Dendritic cell treated with granulocyte-macrophage colony-stimulating factor and Interleukin-4, amounts not matched to agents 40 ng/mL and 50 ng/mL, for 4 days (primary cell): ENCODE measurements at regions of chr20 and their contacts with region 1.

Region 1: DNA sequence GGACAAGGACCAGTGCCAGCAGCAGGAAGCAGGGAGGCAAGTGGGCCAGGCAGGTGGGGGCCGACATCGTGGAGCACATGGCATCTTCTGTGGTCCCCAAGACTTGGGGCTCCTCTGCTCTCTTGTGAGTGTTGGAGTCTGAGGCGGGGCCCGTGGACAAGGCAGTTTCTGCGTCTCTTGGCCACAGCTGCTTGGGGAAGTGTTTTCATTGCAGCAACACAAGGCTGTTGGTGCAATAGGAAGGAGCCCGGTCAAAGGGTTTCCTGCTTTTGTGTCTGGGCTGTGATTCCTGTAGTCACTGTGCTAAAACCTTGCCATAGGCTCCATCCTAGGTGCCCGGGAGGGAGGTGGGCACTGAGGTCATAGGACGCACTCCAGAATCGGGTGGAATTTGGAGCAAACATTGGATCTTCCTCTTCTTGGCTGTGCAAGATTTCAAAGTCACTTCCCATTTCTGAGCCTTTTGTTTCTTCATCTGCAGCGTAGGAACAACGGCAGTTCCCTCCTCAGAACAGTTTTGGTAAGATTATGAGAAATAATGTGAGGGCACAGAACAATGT is at the start of gene SIRPB2:
- H3K4me3 Mint-ChIP-seq: peak within 1 kb of the TSS; percentile 88
- H3K27ac Mint-ChIP-seq: peak within 1 kb of the TSS; percentile 98
- H3K4me1 Mint-ChIP-seq: peaks cover 79% of the 10 kb centered on the region
- H3K27me3 Mint-ChIP-seq: no peaks in the 10 kb centered on the region

Region 2: DNA sequence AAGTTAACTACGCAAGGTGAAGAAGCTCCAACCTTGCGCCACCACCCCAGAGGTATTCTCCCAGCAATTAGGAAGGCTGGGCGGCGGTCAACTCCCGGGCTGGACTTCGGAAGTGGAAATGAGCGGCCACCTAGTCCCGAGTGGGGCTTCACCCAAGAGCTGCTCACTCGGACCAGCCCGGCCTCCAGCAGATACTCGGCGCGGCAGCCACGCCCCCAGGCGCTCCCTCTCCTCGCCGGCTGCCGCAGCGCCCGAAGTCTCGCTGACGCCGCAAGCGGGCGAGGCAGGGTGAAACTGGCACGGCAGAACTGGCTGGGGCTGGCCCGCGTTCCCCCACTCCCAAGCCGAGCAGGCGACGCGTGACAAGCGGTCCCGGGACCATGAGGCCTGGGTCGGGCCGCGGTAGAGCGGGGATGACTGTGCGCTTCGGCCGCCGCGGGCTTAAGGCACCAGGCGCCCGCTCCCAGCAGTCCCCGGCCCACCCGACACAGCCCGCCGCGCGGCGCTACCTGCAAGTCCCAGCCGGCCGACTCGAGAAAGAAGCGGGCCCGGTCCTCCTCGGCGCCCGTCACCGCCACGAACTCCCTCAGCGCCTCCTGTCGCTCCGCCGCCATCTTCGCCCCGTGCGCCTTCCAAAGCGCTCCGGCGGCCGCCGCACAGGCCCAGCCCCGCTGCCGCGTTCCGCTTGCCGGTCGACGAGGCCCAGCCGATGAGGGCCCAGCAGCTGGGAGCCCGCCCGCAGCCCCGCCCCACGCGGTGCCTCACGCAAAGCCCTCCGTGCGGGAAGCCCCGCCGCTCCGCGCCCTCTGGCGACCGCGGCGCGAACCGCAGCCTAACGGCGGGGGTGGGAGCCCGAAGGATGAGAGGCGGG is 24.9 kb before region 1 on chr20 and contains the start of gene NSFL1C:
- intact Hi-C with region 1: loop called (anchors 2 kb)
- H3K4me3 Mint-ChIP-seq: peak within 1 kb of the TSS; percentile 91
- H3K27ac Mint-ChIP-seq: peak within 1 kb of the TSS; percentile 98
- H3K4me1 Mint-ChIP-seq: peaks cover 75% of the 10 kb centered on the region
- H3K27me3 Mint-ChIP-seq: no peaks in the 10 kb centered on the region